Left lung (tissue), 14 donors: ENCODE measurements at regions of chr6 and their contacts with region 1.

Region 1: DNA sequence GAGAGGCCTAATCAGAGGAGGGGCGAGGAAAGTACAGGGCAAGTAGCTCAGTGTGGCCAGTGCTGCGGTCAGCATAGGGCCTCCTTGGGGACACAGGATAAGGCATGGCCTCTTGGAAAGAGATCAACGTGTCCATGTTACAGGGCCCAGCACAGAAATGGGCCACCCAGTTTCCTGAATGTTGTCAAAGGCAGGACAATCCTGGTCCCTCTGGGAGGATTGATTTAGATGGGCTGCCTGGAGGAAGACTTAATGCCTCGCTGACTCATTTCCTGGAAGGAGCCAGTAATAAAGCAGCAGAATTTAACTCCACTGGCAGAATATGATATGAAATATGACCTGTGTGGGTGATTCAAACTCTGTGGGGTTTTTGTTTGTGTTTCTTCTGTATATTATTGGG is 16.6 kb downstream of the DDO start:
- DNase-seq: no peak
- ATAC-seq: no peak
- H3K4me3 ChIP-seq: no peak overlapping the region
- H3K27ac ChIP-seq: no peak overlapping the region
- H3K4me1 ChIP-seq: peaks cover 0 to 8% of the 10 kb centered on the region in 2 donors
- H3K27me3 ChIP-seq: peaks cover 0 to 8% of the 10 kb centered on the region in 2 donors
- CTCF ChIP-seq: no peak

Region 2: DNA sequence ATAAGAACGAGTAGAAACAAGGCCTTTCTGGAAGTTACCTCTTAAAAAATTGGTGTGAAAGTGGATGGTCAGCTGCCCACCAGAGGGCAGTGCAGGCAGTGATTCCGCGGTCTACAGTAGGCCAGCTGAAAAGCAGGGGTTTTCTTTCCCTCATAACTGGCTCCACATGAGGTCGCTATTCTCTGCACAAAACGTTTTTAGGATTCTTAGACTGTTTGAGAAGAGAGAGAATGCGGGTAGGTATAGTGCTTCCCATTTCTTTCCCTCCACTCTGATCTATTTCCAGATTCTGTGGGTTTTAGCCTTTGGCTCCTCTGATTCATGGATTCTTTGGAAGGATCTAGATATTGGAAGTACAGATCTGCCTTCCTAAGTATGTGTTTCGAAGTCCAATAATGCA is 693.5 kb before region 1 on chr6:
- intact Hi-C with region 1: loop called in 1 of 2 experiments (anchors 10 kb)
- DNase-seq: peak; percentile 77 to 90 (median 84)
- ATAC-seq: peak; percentile 99
- H3K4me3 ChIP-seq: no peak overlapping the region
- H3K27ac ChIP-seq: no peak overlapping the region
- H3K4me1 ChIP-seq: peaks cover 0 to 55% of the 10 kb centered on the region in 2 donors
- H3K27me3 ChIP-seq: no peaks in the 10 kb centered on the region
- CTCF ChIP-seq: peak; percentile 88 to 94

Region 3: GRCh38 chr6:110053395-110054240 is 345.2 kb before region 1 on chr6:
- intact Hi-C with region 1: loop called in 1 of 2 experiments (anchors 10 kb)
- DNase-seq: peak in 1 of 4 donors; percentile 63
- ATAC-seq: peak; percentile 87
- H3K4me3 ChIP-seq: no peak overlapping the region
- H3K27ac ChIP-seq: no peak overlapping the region
- H3K4me1 ChIP-seq: no peaks in the 10 kb centered on the region
- H3K27me3 ChIP-seq: no peaks in the 10 kb centered on the region
- CTCF ChIP-seq: peak; percentile 62 to 63